ENCODE measurements at regions of chr9 and their contacts with region 1.

Region 1: GRCh38 chr9:34500623-34501267 is 22.0 kb downstream of the ENHO start:
- H3K4me3 ChIP-seq: no peak overlapping the region
- H3K27ac ChIP-seq: no peak overlapping the region
- H3K4me1 ChIP-seq: no peaks in the 10 kb centered on the region
- CTCF ChIP-seq: peak; percentile 58

Region 2: GRCh38 chr9:33942471-33943083 is 558.2 kb before region 1 on chr9:
- CTCF ChIA-PET with region 1: no interaction called
- POLR2A ChIA-PET with region 1: no interaction called
- H3K4me3 ChIP-seq: no peak overlapping the region
- H3K27ac ChIP-seq: no peak overlapping the region
- H3K4me1 ChIP-seq: no peaks in the 10 kb centered on the region
- CTCF ChIP-seq: no peak

Region 3: DNA sequence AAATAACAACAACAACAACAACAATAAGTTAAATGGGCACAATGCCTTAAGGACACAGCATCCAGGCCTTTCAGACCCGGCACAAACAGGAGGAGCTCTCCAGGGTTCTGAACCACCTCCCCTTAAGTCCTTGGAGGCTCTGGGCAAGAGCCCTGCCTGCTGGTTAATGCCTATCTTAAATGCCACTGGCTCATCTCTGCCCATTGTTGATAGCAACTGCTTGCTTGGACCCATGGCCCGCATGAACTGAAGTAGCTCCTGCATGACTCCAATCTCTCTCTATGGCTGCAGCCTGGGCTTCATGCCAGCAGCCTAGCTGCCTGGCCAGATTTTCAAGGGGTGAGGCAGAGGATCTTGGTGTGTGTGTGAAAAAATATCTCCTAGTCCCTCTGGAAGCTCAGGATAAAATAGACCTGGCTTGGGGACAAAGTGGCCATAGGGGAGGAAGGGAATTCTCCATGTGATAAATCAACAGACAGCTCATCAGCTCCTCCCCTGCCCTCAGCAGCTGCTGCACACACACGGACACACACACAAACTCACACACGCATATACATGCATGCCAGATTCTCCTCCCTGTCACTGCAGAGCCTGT is 69.8 kb before region 1 on chr9:
- CTCF ChIA-PET with region 1: interaction called, 30 read pairs
- POLR2A ChIA-PET with region 1: no interaction called
- H3K4me3 ChIP-seq: no peak overlapping the region
- H3K27ac ChIP-seq: no peak overlapping the region
- H3K4me1 ChIP-seq: no peaks in the 10 kb centered on the region
- CTCF ChIP-seq: no peak

Region 4: GRCh38 chr9:34446468-34446891 is 54.3 kb before region 1 on chr9:
- CTCF ChIA-PET with region 1: interaction called, 15 read pairs
- POLR2A ChIA-PET with region 1: no interaction called
- H3K4me3 ChIP-seq: no peak overlapping the region
- H3K27ac ChIP-seq: no peak overlapping the region
- H3K4me1 ChIP-seq: no peaks in the 10 kb centered on the region
- CTCF ChIP-seq: no peak

Region 5: GRCh38 chr9:34463098-34463900 is 37.4 kb before region 1 on chr9:
- CTCF ChIA-PET with region 1: interaction called, 16 read pairs
- POLR2A ChIA-PET with region 1: no interaction called
- H3K4me3 ChIP-seq: no peak overlapping the region
- H3K27ac ChIP-seq: no peak overlapping the region
- H3K4me1 ChIP-seq: peaks cover 2% of the 10 kb centered on the region; the same call in 1 of the 2 replicates
- CTCF ChIP-seq: no peak

Region 6: DNA sequence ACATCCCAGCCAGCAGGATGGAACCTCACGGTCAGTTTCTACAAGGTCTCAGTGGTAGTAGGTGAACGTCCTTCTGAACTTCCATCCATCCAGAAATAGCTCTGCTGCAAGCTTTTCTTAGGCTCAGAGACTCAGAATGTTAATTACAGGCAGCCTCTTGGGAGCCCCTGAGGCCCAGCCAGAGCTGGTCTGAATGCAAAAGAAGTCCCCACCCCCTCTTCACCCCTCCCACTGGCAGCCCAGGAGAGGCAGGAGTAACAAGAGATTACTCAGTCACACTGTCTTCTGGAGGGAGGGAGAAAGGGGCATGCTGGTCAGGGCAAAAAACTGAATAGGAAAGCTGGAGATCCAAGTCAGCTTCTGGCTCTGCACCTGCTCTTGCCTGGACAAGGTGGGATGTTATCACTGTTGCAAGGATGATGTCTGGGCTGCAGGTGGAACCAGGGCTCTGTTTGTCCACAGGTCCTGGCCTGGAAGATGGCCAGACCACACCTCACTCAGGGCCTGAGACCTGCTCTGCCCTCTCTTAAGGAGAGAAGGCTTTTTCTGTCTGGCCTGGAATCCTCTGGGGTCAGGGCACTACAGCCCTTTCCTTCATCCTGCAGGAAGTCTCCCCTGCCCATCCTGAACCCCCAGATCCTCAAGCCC is 12.9 kb after region 1 on chr9:
- CTCF ChIA-PET with region 1: interaction called, 53 read pairs
- POLR2A ChIA-PET with region 1: no interaction called
- H3K4me3 ChIP-seq: no peak overlapping the region
- H3K27ac ChIP-seq: no peak overlapping the region
- H3K4me1 ChIP-seq: peaks cover 3% of the 10 kb centered on the region
- CTCF ChIP-seq: no peak

Region 7: DNA sequence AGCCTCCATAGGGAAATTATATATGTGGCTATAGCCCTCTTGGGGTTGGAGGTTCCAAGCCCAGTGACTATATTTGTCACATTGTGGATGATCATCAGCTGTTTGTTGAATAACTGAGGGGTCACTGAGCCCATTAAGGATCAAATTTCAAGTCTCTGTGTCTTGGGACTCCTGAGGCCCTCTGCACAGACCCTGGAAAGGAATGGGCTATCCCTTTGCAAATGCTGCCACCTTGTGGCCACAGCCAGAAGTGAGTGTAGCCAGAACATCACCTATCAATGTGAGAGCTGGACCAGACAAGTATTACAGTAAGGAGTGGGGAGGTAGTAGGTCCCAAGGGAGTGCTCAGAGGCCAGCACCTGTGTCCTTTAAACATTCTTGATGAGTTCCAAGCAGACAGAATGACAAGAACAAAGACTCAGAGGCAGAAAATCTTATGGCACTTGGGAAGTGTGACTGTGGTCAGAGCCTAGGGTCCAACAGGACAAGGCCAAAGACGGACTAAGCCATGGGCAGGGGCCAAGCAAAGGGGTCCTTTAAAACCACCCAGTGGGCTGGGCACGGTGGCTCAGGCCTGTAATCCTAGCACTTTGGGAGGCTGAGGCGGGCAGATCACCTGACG is 103.0 kb after region 1 on chr9:
- CTCF ChIA-PET with region 1: interaction called, 17 read pairs
- POLR2A ChIA-PET with region 1: no interaction called
- H3K4me3 ChIP-seq: no peak overlapping the region
- H3K27ac ChIP-seq: no peak overlapping the region
- H3K4me1 ChIP-seq: no peaks in the 10 kb centered on the region
- CTCF ChIP-seq: peak; percentile 77

Measured in HEK293 (cell line).